ENCODE measurements at regions of chr17 and their contacts with region 1.

Region 1: GRCh38 chr17:42980398-42981397 is at the start of gene RUNDC1:
- DNase-seq: peak; percentile 95
- ATAC-seq: peak; percentile 87
- H3K4me3 Mint-ChIP-seq: peak within 1 kb of the TSS; percentile 99
- H3K27ac Mint-ChIP-seq: peak within 1 kb of the TSS; percentile 98
- H3K4me1 Mint-ChIP-seq: peaks cover 32% of the 10 kb centered on the region
- H3K27me3 Mint-ChIP-seq: no peaks in the 10 kb centered on the region
- total RNA-seq, gene RUNDC1: 12.3 to 12.5 TPM

Region 2: GRCh38 chr17:42832974-42833766 is 147.5 kb before region 1 on chr17 and contains the start of gene PSME3:
- CTCF ChIA-PET with region 1: no interaction called
- POLR2A ChIA-PET with region 1: no interaction called
- intact Hi-C with region 1: loop called (anchors 1 to 5 kb)
- DNase-seq: peak; percentile 94
- ATAC-seq: peak; percentile 90
- H3K4me3 Mint-ChIP-seq: peak within 1 kb of the TSS; percentile 96
- H3K27ac Mint-ChIP-seq: peak within 1 kb of the TSS; percentile 98
- H3K4me1 Mint-ChIP-seq: peaks cover 18% of the 10 kb centered on the region
- H3K27me3 Mint-ChIP-seq: no peaks in the 10 kb centered on the region
- total RNA-seq, gene PSME3: 116 to 118 TPM

Region 3: DNA sequence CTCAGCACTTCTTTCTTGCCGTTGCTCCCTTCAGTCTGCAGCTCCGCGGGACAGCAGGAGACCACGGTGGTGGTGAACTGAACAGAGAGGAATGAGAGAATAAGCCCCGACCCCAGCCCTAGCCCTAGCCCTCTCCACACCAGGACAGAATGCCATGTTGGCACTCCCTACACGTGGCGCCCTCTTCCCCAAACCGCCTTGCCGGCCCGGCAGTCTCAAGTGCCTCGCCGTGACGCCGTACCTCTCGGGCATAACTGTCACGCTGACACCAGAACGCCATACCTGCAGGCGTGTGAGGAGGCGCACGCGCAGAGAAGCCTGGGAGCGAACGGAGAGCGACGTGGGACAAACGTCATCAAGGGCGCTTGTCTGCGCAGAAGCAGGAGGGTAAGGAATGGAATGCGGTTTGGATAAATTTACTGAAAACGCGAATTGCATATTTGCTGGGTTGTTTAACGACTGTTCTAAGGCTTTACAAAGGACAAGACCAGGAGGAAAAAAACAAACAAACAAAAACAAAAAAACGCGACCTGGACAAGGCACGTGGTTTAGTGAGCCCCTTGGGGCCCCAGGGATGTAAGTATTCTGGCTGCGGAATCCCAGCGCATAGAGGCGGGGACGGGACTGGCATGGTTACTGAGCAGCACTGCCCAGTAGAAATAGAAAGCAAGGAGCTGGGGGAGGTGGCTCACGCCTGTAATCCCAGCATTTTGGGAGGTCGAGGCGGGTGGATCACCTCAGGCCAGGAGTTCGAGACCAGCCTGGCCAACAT is 16.4 kb before region 1 on chr17 and contains the start of gene AARSD1:
- CTCF ChIA-PET with region 1: interaction called, 4 read pairs
- POLR2A ChIA-PET with region 1: no interaction called
- intact Hi-C with region 1: loop called (anchors 1 kb)
- DNase-seq: peak; percentile 95
- ATAC-seq: peak; percentile 95
- H3K4me3 Mint-ChIP-seq: peak within 1 kb of the TSS; percentile 93
- H3K27ac Mint-ChIP-seq: peak within 1 kb of the TSS; percentile 90
- H3K4me1 Mint-ChIP-seq: peaks cover 22% of the 10 kb centered on the region
- H3K27me3 Mint-ChIP-seq: no peaks in the 10 kb centered on the region
- total RNA-seq, gene AARSD1: 40.8 to 58.6 TPM

Region 4: GRCh38 chr17:43024407-43025289 is 44.0 kb after region 1 on chr17 and contains the start of gene RND2:
- CTCF ChIA-PET with region 1: no interaction called
- POLR2A ChIA-PET with region 1: no interaction called
- intact Hi-C with region 1: no loop called
- DNase-seq: peak; percentile 89
- ATAC-seq: peak; percentile 68
- H3K4me3 Mint-ChIP-seq: peak within 1 kb of the TSS; percentile 78
- H3K27ac Mint-ChIP-seq: peak within 1 kb of the TSS; percentile 71
- H3K4me1 Mint-ChIP-seq: peaks cover 26% of the 10 kb centered on the region
- H3K27me3 Mint-ChIP-seq: no peaks in the 10 kb centered on the region
- total RNA-seq, gene RND2: 0.05 to 0.16 TPM

Measured in activated CD4-positive, alpha-beta T cell treated with anti-CD3 and anti-CD28 coated beads for 36 hours (primary cell).